Transverse colon (tissue), 4 donors: ENCODE measurements at regions of chr6 and their contacts with region 1.

Region 1: GRCh38 chr6:868201-868600 is 175.3 kb upstream of the EXOC2 start:
- DNase-seq: no peak
- H3K4me3 ChIP-seq: no peak overlapping the region
- H3K27ac ChIP-seq: no peak overlapping the region
- H3K4me1 ChIP-seq: peaks cover 0 to 3% (median 0%) of the 10 kb centered on the region in 4 donors
- H3K27me3 ChIP-seq: no peaks in the 10 kb centered on the region
- CTCF ChIP-seq: no peak
- EP300 ChIP-seq: no peak
- POLR2A ChIP-seq: no peak

Region 2: DNA sequence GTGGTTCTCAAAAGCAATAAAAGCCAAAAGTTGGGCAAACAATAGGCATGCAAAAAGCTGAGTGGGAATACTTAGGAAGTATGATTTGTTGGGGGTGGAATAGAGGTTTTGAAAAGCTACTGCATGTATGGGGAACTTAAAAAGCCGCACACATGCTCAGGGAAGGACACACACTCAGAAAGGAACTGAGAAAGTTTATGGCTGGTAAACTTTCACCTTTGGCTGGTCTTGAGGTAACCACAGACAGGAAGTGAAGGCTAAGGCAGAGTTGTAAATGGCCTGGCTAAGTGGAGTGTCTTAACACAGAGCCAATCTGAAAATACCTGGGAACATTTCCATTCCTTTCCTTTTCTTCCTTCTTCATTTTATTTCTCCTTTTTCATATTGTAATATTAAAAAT is 40.8 kb before region 1 on chr6:
- in situ Hi-C with region 1: no loop called
- intact Hi-C with region 1: loop called (anchors 2 kb)
- DNase-seq: no peak
- H3K4me3 ChIP-seq: no peak overlapping the region
- H3K27ac ChIP-seq: no peak overlapping the region
- H3K4me1 ChIP-seq: no peaks in the 10 kb centered on the region
- H3K27me3 ChIP-seq: no peaks in the 10 kb centered on the region
- CTCF ChIP-seq: no peak
- EP300 ChIP-seq: no peak
- POLR2A ChIP-seq: no peak